CD4-positive, alpha-beta memory T cell (primary cell): ENCODE measurements at regions of chr16 and their contacts with region 1.

Region 1: GRCh38 chr16:69260019-69260418 is 51.1 kb upstream of the VPS4A start:
- DNase-seq: no peak
- H3K4me3 ChIP-seq: no peak overlapping the region
- H3K4me3 Mint-ChIP-seq: no peak overlapping the region
- H3K27ac ChIP-seq: no peak overlapping the region
- H3K27ac Mint-ChIP-seq: peak overlapping the region in 2 of 7 donors; percentile 10 to 29
- H3K4me1 ChIP-seq: no peaks in the 10 kb centered on the region
- H3K4me1 Mint-ChIP-seq: peaks cover 4 to 11% (median 7%) of the 10 kb centered on the region in 4 donors
- H3K27me3 ChIP-seq: no peaks in the 10 kb centered on the region
- H3K27me3 Mint-ChIP-seq: no peaks in the 10 kb centered on the region

Region 2: DNA sequence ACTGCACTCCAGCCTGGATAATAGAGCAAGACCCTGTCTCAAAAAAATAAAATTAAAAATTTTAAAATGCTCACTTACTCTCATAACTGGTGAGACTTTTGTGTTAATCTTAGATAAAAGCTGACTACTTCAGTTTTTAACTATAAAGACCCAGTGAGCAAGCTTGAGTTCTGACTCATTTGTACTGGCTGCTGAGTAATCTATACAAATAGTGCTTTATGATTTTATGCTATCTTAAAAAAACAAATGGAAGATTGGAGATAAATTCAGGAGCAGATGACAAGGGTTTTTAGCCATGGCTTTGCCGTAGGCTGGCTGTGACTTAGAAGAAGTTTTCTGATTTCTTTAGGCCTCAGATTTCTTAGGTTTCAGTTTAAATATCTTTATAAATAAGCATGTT is 42.6 kb before region 1 on chr16:
- CTCF ChIA-PET with region 1: no interaction called
- POLR2A ChIA-PET with region 1: no interaction called
- intact Hi-C with region 1: loop called (anchors 10 kb)
- DNase-seq: no peak
- H3K4me3 ChIP-seq: no peak overlapping the region
- H3K4me3 Mint-ChIP-seq: no peak overlapping the region
- H3K27ac ChIP-seq: no peak overlapping the region
- H3K27ac Mint-ChIP-seq: no peak overlapping the region
- H3K4me1 ChIP-seq: peaks cover 7% of the 10 kb centered on the region
- H3K4me1 Mint-ChIP-seq: peaks cover 11 to 16% (median 13%) of the 10 kb centered on the region in 4 donors
- H3K27me3 ChIP-seq: no peaks in the 10 kb centered on the region
- H3K27me3 Mint-ChIP-seq: no peaks in the 10 kb centered on the region

Region 3: GRCh38 chr16:69339289-69340108 is 79.5 kb after region 1 on chr16 and contains the starts of genes COG8 and NIP7:
- CTCF ChIA-PET with region 1: no interaction called
- POLR2A ChIA-PET with region 1: no interaction called
- intact Hi-C with region 1: no loop called
- DNase-seq: peak; percentile 90 to 94 (median 91)
- H3K4me3 ChIP-seq: peak within 1 kb of the TSS; percentile 77 to 97
- H3K4me3 Mint-ChIP-seq: peak within 1 kb of the TSS; percentile 96 to 100 (median 100)
- H3K27ac ChIP-seq: peak within 1 kb of the TSS; percentile 81
- H3K27ac Mint-ChIP-seq: peak within 1 kb of the TSS; percentile 96 to 100 (median 99)
- H3K4me1 ChIP-seq: peaks cover 39% of the 10 kb centered on the region
- H3K4me1 Mint-ChIP-seq: peaks cover 34 to 74% (median 51%) of the 10 kb centered on the region in 4 donors
- H3K27me3 ChIP-seq: no peaks in the 10 kb centered on the region
- H3K27me3 Mint-ChIP-seq: no peaks in the 10 kb centered on the region
- total RNA-seq, gene COG8: 66.0 to 66.1 TPM
- total RNA-seq, gene NIP7: 30.9 to 31.9 TPM